Left colon (tissue), 2 donors: ENCODE measurements at regions of chr16 and their contacts with region 1.

Region 1: DNA sequence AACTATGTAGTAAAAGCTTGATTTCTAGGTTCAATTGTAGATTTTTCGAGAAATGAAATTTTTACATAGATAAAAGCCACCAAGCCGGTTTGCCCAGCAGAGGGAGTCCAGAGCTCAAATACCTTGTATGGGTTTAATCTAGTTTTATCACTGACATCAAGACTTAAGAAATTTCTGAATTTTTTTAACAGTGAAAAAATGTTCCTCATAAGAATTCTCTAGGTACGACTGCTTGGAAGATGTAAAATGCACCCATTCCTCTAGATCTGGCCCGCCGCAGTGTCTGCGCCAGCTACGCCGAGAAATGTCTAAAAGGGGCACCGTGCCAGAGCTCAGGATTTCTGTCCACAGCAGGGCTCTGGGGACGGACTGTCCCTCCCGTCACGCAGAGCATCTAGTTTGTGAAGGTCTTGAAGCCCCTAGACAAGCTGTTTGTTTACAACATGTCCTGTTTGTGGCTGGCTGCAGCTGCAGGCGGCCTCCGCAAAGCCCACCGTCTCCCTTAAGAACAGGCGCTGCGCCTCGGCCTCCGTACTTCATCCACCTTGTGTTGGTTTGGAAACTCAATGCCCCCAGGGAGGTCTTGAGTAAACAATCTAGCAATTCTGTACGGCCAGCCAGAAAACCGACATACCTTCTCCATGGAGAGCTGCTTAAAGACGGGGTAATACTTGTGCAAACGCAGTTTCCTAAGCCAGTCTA is 24.8 kb downstream of the MAP1LC3B start:
- DNase-seq: peak in 1 of 2 donors; percentile 63
- ATAC-seq: no peak

Region 2: DNA sequence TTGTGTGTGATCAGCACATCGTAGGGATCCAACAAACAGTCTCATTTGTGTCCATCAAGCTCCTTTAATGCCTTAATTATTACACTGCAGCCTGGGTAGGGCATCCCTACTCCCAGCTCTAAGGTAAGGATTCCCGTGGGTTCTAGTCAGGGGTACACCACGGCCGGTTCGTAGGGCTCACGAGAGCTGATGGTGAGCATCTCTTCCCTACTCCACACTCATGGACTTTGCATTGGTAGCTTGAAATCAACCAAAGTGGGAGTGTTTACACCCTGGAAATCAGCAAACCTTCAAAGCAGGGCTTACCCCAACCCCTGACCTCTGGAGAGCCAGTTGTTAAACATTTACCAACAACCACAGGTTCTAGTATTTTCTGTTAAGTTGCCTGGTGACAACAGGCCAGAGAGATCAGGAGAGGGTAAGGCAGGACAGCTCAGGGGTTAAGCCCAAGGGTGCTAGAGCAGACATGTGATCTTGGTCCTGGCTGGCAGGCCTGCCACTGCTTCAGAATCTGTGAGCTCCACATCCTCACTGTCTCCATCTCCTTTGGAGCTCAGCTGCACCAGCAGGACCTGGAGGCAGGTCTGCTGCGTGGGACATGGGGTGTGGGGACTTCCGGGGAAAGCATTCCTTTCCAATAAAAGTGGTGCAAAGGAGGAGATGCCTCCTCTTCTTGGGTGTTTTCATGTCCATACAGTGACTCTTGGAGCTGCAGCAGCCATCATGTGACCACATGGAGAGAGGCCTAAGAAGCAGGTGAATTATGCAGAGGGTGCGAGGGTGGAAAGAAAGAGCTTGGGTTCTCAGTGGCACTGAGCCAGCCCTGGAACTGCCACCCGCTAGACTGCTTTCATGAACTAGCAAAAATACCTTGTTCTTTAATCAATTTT is 112.0 kb after region 1 on chr16:
- intact Hi-C with region 1: no loop called
- DNase-seq: no peak
- ATAC-seq: no peak

Region 3: GRCh38 chr16:87540945-87541877 is 124.2 kb after region 1 on chr16:
- intact Hi-C with region 1: loop called in 1 of 2 experiments (anchors 10 kb)
- DNase-seq: no peak
- ATAC-seq: no peak

Region 4: DNA sequence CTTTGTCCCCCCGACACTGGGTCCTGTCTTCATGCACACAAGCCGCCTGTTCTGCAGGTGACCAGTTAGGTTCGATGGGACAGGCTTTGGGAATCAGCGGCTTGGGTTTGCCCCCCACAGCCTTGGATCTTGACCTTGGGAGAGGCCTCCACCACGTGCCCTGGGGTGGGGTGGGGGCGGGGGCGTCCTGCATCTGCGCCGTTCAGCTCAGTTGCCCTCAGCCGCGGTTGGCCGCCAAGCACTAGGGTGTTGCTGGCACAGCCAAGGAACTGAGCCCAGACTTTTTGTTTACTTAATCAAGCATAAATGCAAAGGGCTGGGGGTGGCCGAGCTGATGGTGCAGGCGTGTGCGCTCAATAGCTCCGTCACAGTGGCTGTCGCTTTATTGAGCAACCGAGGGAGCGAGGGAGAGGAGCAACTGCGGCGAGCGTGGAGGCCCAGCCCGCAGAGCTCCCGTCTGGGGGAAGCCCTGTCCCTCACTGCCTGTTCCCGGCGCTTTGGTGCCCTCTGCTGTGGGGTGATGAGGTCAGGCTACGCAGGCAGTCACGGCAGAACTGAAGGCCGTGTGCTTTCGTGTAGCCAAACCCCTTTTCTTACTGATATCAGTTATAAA is 219.2 kb after region 1 on chr16:
- intact Hi-C with region 1: loop called in 1 of 2 experiments (anchors 10 kb)
- DNase-seq: peak; percentile 73 to 86
- ATAC-seq: peak; percentile 95